ENCODE measurements at regions of chr4 and their contacts with region 1.

Region 1: DNA sequence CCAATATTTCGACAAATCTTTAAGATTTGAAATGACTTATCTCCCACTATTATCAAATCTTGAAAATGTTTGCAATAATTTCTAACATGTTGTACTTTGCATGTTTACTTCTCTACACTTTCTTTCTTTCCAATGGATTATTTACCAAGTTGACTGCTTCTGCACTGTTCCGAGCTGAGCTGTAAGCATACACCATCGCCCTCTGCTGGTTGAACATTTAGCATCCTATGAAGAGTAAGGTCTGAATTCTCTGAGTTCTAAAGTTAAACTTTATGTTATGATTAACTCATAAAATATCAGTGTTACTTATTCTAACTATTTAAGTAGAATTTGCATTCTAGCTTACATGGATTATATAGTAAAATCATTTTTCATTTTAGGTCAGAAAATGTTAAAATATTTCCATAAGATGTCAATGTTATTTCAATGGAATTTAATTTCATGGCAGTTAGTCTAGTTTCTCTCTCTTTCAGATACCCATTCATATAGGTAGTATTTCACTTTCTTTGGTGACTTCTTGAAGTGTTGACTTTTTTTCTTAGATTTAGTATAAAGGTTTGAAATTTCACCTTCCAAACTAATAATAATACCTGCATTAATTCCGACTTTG is 137.4 kb downstream of the DKK2 start:
- DNase-seq: peak; percentile 12
- H3K4me3 Mint-ChIP-seq: no peak overlapping the region
- H3K27ac Mint-ChIP-seq: no peak overlapping the region
- H3K4me1 Mint-ChIP-seq: no peaks in the 10 kb centered on the region
- H3K27me3 Mint-ChIP-seq: no peaks in the 10 kb centered on the region

Region 2: GRCh38 chr4:106369456-106370060 is 529.2 kb before region 1 on chr4:
- CTCF ChIA-PET with region 1: no interaction called
- POLR2A ChIA-PET with region 1: no interaction called
- intact Hi-C with region 1: loop called (anchors 1 kb)
- DNase-seq: peak; percentile 11
- H3K4me3 Mint-ChIP-seq: no peak overlapping the region
- H3K27ac Mint-ChIP-seq: no peak overlapping the region
- H3K4me1 Mint-ChIP-seq: no peaks in the 10 kb centered on the region
- H3K27me3 Mint-ChIP-seq: peaks cover 18% of the 10 kb centered on the region

Region 3: DNA sequence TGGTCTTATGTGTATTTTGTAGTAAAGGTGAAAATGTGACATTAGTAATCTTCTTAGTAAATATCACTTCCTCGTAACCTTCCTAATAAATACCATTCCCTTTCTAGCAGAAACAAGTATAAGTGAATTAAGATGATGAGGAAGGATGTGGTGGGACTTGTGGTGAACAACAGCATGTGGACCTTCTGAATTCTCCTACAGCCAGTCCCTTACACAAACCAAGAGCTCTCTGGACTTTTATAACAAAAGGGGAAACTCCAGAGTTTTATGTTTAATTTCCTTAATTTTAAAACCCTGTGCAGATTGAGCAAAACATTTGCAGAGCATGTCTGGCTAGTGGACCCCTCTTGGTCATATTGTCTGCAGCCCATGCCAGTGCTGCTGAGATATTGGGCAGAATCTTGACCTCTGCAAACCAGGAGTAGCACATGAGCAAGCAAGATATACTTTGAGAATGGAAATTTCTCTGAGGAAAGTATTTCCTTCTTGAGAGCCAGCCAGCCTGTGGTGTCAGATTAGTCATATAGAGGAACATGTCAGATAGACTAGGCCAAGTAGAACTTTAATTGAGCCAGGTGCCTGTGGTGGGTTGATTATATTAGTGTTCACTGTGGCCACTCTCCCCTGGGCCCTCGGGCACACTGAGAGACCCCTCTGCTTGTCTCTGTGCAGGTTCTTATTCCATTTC is 190.8 kb before region 1 on chr4:
- CTCF ChIA-PET with region 1: no interaction called
- POLR2A ChIA-PET with region 1: no interaction called
- intact Hi-C with region 1: no loop called
- DNase-seq: no peak
- H3K4me3 Mint-ChIP-seq: no peak overlapping the region
- H3K27ac Mint-ChIP-seq: no peak overlapping the region
- H3K4me1 Mint-ChIP-seq: no peaks in the 10 kb centered on the region
- H3K27me3 Mint-ChIP-seq: no peaks in the 10 kb centered on the region

Region 4: GRCh38 chr4:107392951-107393350 is 494.2 kb after region 1 on chr4:
- CTCF ChIA-PET with region 1: no interaction called
- POLR2A ChIA-PET with region 1: no interaction called
- intact Hi-C with region 1: no loop called
- DNase-seq: no peak
- H3K4me3 Mint-ChIP-seq: no peak overlapping the region
- H3K27ac Mint-ChIP-seq: no peak overlapping the region
- H3K4me1 Mint-ChIP-seq: no peaks in the 10 kb centered on the region
- H3K27me3 Mint-ChIP-seq: no peaks in the 10 kb centered on the region